ENCODE measurements at regions of chr11 and their contacts with region 1.

Region 1: DNA sequence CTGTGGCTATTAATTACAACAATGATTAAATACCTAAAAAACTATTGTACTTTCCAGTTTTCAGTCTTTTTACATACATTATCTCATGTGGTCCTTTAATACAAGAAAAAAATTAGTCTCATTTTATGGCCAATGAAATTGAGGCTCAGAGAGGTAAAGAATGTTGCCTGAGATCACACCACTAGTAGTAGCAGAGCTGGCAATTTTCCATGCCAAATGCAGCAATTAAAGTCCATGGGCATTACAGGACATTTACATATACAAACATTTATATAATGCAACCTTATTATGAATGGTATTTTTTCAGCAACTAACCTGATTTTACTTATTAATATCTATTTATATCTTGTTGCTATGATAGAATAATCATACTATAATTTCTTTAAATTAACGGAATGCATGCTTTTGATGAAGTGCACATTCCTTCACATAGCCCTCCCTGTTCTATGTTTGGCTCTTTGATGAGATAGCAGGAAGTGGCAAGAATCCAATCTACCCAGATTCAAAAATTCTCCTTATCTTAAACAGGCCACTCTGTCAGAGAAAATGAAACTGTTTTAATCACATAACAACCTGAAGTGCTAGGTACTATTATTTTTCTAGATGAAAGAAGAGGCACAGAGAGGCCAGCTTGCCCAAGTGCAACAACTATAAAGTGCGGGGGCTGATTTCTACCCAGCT is 120.9 kb upstream of the LDLRAD3 start:
- DNase-seq: no peak
- H3K4me3 ChIP-seq: no peak overlapping the region
- H3K27ac ChIP-seq: no peak overlapping the region
- H3K4me1 ChIP-seq: peaks cover 8% of the 10 kb centered on the region
- H3K27me3 ChIP-seq: no peaks in the 10 kb centered on the region
- CTCF ChIP-seq: no peak
- POLR2A ChIP-seq: no peak

Region 2: DNA sequence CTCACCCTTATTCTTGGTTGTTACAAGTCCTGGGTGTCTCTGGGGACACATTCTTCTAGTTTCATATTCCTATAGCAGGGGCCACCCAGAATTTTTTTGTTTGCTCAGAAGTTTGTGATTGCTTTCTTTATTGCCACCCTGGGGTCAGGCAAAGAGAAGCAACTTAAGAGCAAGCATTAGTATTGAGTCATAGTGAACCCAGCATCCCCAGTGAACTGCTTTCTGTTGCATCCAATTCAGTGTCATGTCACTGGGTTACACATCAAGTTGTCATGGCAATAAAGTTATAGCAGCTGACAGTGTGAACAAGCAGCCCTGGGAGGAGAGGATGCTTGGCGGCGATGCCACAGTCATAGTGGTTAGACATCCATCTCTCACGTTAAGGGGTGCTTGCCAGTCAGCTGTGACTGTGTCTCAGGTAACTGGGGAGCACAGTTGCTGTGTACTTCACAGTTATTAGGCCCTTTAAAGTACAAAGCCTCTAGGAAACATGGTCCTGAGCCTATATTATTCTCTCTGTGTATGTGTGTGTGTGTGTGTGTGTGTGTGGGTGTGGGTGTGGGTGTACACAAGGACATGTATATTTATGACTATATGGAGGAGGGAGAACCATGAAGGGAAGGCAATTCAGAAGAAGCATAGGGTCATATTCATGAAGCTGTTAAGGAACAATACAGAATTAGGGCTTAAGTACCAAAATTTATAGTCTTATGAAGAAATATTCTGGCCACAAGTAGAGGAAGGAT is 107.9 kb before region 1 on chr11:
- CTCF ChIA-PET with region 1: interaction called, 34 read pairs
- POLR2A ChIA-PET with region 1: no interaction called
- dilution Hi-C with region 1: no loop called
- intact Hi-C with region 1: loop called (anchors 1 kb)
- DNase-seq: no peak
- H3K4me3 ChIP-seq: no peak overlapping the region
- H3K27ac ChIP-seq: no peak overlapping the region
- H3K4me1 ChIP-seq: no peaks in the 10 kb centered on the region
- H3K27me3 ChIP-seq: no peaks in the 10 kb centered on the region
- CTCF ChIP-seq: no peak
- POLR2A ChIP-seq: no peak

Region 3: GRCh38 chr11:35811775-35812174 is 11.2 kb before region 1 on chr11:
- CTCF ChIA-PET with region 1: interaction called, 52 read pairs
- POLR2A ChIA-PET with region 1: interaction called, 3 read pairs
- dilution Hi-C with region 1: no loop called
- intact Hi-C with region 1: no loop called
- DNase-seq: no peak
- H3K4me3 ChIP-seq: no peak overlapping the region
- H3K27ac ChIP-seq: no peak overlapping the region
- H3K4me1 ChIP-seq: no peaks in the 10 kb centered on the region
- H3K27me3 ChIP-seq: no peaks in the 10 kb centered on the region
- CTCF ChIP-seq: no peak
- POLR2A ChIP-seq: no peak

Region 4: DNA sequence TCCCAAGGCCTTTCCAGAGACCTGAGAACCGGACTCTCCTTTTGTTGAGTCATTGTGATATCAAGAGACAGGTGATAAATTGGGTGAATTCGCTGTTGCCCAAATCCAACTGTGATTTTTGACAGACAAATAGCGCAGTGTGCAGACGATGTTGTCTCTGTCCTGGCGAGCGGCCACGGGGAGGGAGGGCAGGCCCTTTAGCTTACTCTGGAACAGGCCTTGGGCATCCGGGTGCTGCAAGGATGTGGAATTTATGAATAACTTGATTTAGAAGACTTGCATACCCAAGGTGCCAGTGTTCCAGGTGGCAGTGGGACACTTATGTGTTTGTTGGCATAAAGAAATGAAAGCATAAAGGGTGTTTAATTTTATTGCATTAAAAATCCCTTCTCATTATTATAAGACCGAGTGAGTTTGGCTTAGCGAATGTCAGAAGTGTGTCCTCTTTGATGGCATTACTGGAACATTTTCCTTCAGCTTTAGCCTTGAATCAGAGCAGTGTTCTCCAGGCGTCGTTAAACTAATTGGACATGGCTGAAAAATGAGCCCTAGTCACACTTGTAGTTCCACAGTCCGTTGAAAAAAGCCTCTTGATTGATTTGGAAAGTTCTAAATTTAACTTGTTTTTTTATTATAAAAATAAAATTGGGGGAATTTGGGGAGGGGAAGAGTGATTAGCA is 130.3 kb after region 1 on chr11:
- CTCF ChIA-PET with region 1: interaction called, 55 read pairs
- POLR2A ChIA-PET with region 1: no interaction called
- dilution Hi-C with region 1: no loop called
- intact Hi-C with region 1: no loop called
- DNase-seq: peak; percentile 42
- H3K4me3 ChIP-seq: no peak overlapping the region
- H3K27ac ChIP-seq: peak overlapping the region; percentile 35
- H3K4me1 ChIP-seq: peaks cover 31% of the 10 kb centered on the region
- H3K27me3 ChIP-seq: no peaks in the 10 kb centered on the region
- CTCF ChIP-seq: no peak
- POLR2A ChIP-seq: no peak

Region 5: GRCh38 chr11:36041988-36042611 is 219.1 kb after region 1 on chr11:
- CTCF ChIA-PET with region 1: interaction called, 41 read pairs
- POLR2A ChIA-PET with region 1: no interaction called
- dilution Hi-C with region 1: no loop called
- intact Hi-C with region 1: loop called (anchors 5 kb)
- DNase-seq: peak; percentile 29
- H3K4me3 ChIP-seq: no peak overlapping the region
- H3K27ac ChIP-seq: no peak overlapping the region
- H3K4me1 ChIP-seq: no peaks in the 10 kb centered on the region
- H3K27me3 ChIP-seq: no peaks in the 10 kb centered on the region
- CTCF ChIP-seq: peak; percentile 44 to 45
- POLR2A ChIP-seq: no peak

Region 6: DNA sequence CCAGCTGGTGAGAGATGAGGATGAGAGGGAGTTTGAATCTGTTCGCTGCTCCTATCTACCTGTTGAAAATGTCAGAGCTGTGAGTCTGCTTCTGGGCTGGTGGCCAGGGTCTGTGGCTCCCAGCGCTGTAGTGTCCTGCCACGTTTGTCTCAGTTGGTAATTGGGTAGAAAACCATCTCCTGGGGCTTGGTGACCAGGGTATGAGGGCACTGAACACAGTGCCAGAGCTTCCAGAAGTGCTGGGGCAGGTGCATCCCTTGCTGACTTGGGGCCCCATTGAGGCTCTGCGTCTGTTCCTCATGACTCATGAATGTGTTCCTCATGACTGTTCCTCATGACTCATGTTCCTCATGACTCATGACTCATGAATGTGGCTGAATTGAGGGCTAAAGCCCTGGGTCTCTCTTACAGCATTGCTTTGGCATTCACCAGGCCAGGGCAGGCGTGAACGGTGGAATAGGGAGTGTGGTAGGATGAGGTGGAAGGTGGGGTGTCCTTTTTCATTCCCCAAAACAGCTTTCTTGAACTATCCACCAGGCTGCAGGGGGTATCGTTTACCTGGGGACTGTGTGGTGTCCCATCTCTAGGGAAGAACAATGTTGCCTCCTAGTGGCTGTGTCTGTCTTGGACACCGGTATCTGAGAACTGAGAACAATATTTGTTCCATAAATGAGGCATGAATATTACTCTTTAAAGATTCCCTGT is 326.7 kb after region 1 on chr11:
- CTCF ChIA-PET with region 1: interaction called, 11 read pairs
- POLR2A ChIA-PET with region 1: no interaction called
- dilution Hi-C with region 1: no loop called
- intact Hi-C with region 1: loop called (anchors 1 kb)
- DNase-seq: peak; percentile 99
- H3K4me3 ChIP-seq: no peak overlapping the region
- H3K27ac ChIP-seq: peak overlapping the region; percentile 93
- H3K4me1 ChIP-seq: peaks cover 25% of the 10 kb centered on the region
- H3K27me3 ChIP-seq: no peaks in the 10 kb centered on the region
- CTCF ChIP-seq: peak; percentile 43 to 50
- POLR2A ChIP-seq: peak; percentile 64